ENCODE measurements at regions of chr9 and their contacts with region 1.

Region 1: DNA sequence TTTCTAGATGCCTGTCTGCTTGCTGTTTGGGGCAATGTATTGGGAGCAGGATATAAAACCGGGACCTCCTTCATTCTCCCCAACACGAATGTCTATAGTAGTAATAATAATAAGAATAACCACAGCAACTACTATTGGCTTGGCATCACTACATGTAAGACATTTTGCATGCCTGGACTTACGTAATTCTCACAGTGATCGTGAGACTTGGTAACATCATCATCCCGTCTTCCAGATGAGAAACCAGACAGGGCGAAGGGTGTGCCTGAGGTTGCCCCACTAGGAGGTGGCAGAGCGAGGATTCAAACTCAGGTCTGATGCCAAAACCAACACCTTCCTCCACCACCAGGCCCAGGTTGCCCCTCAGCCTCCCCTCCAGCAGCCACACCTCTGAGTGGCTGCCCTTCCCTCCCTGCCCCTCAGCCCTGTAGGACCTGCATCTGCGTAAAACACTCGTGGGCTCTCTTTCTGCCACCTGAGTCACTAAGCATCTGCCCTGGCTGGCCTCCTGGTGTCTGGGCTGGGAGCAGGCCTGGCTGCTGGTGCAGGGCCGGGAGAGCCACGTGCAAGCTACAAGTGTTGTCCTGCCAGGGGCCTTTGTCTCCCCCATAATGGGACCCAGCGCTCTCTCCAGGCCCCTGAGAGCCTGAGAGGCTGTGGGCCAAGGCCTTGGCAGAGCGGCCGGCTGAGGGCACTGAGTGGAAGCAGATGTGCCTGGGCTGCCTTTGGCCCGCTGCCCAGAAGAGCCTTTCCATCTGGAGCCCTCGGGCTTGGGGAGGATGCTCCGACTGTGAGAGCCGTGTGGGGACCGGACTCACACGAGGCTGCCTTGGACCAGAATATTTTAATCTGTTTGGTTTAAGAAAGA is 185.3 kb downstream of the RGS3 start:
- ATAC-seq: peak in 6 of 8 experiments; percentile 65 to 99 (median 78)
- H3K4me3 ChIP-seq: no peak overlapping the region
- H3K27ac ChIP-seq: no peak overlapping the region
- H3K4me1 ChIP-seq: peaks cover 3 to 9% of the 10 kb centered on the region in 2 donors

Region 2: DNA sequence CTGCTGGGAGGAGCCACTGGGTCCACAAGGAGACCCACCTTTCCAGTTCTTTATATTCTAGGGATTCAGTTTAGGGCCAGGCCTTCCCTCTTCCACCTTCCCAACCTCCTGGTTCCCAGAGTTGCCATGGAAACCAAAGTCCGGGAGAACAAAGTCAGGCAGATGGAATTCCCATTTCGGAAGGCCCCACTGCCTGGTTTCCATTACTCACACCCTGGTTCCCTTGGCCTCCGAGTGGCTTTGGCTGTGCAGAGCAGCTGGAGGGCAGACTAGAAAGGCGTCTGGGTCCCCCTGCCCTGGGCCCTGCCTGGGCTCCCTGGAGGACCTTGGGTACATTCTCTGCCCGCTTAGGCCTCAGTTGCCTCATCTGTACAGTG is 49.2 kb before region 1 on chr9:
- in situ Hi-C with region 1: loop called in 3 of 9 experiments (anchors 5 to 10 kb)
- ATAC-seq: no peak
- H3K4me3 ChIP-seq: no peak overlapping the region
- H3K27ac ChIP-seq: no peak overlapping the region
- H3K4me1 ChIP-seq: peaks cover 18 to 34% of the 10 kb centered on the region in 2 donors

Region 3: GRCh38 chr9:113963017-113963620 is 314.3 kb after region 1 on chr9:
- in situ Hi-C with region 1: no loop called
- ATAC-seq: peak in 3 of 8 experiments; percentile 8 to 64 (median 63)
- H3K4me3 ChIP-seq: no peak overlapping the region
- H3K27ac ChIP-seq: peak overlapping the region in 1 of 2 donors; percentile 89
- H3K4me1 ChIP-seq: peaks cover 24 to 33% of the 10 kb centered on the region in 2 donors

Measured in motor neuron (in vitro differentiated cells).